Naive thymus-derived CD4-positive, alpha-beta T cell (primary cell): ENCODE measurements at regions of chr15 and their contacts with region 1.

Region 1: DNA sequence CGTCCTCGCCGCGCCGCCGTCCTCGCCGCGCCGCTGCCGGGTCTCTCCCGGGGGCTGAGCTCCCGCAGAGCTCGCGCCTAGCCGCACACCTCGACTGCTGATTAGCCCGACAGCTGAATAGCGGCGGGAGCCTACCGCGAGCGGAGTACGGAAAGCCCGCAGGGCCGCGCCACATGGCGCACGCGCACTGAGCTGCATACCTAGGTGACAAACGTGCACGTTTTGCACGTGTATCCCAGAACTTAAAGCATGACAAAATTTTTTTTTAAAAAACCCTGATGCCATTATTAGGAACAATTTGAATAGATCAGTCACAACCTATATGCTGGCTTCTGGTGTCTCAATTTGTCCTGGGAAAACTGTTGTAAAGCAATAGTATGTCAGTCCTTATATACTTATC is at the start of gene GOLGA8A:
- DNase-seq: peak in 8 of 9 donors; percentile 62 to 88 (median 82)
- ATAC-seq: peak; percentile 88
- H3K4me3 ChIP-seq: peak within 1 kb of the TSS; percentile 51
- H3K4me3 Mint-ChIP-seq: peak within 1 kb of the TSS in 9 of 10 donors; percentile 81 to 98 (median 95)
- H3K27ac ChIP-seq: peak within 1 kb of the TSS; percentile 60
- H3K27ac Mint-ChIP-seq: peak within 1 kb of the TSS in 8 of 9 donors; percentile 78 to 96 (median 94)
- H3K4me1 ChIP-seq: peaks cover 6 to 12% of the 10 kb centered on the region in 2 donors
- H3K4me1 Mint-ChIP-seq: peaks cover 3 to 32% (median 21%) of the 10 kb centered on the region in 7 donors
- H3K27me3 ChIP-seq: no peaks in the 10 kb centered on the region
- H3K27me3 Mint-ChIP-seq: peaks cover 0 to 16% (median under 1%) of the 10 kb centered on the region in 5 donors
- total RNA-seq, gene GOLGA8A: 147 to 361 (median 158) TPM

Region 2: GRCh38 chr15:34241372-34242330 is 196.0 kb before region 1 on chr15:
- CTCF ChIA-PET with region 1: no interaction called
- POLR2A ChIA-PET with region 1: no interaction called
- intact Hi-C with region 1: loop called in 1 of 2 experiments (anchors 5 kb)
- DNase-seq: peak in 7 of 9 donors; percentile 38 to 65 (median 52)
- ATAC-seq: peak; percentile 91
- H3K4me3 ChIP-seq: no peak overlapping the region
- H3K4me3 Mint-ChIP-seq: no peak overlapping the region
- H3K27ac ChIP-seq: no peak overlapping the region
- H3K27ac Mint-ChIP-seq: peak overlapping the region in 7 of 9 donors; percentile 7 to 75 (median 47)
- H3K4me1 ChIP-seq: no peaks in the 10 kb centered on the region
- H3K4me1 Mint-ChIP-seq: peaks cover 0 to 13% (median 4%) of the 10 kb centered on the region in 7 donors
- H3K27me3 ChIP-seq: no peaks in the 10 kb centered on the region
- H3K27me3 Mint-ChIP-seq: no peaks in the 10 kb centered on the region

Region 3: GRCh38 chr15:34987985-34988873 is 550.5 kb after region 1 on chr15 and contains the start of gene ZNF770:
- CTCF ChIA-PET with region 1: no interaction called
- POLR2A ChIA-PET with region 1: no interaction called
- intact Hi-C with region 1: loop called in 1 of 2 experiments (anchors 2 kb)
- DNase-seq: peak; percentile 67 to 91 (median 85)
- ATAC-seq: peak; percentile 95
- H3K4me3 ChIP-seq: peak within 1 kb of the TSS; percentile 99
- H3K4me3 Mint-ChIP-seq: peak within 1 kb of the TSS; percentile 93 to 100 (median 98)
- H3K27ac ChIP-seq: peak within 1 kb of the TSS; percentile 97
- H3K27ac Mint-ChIP-seq: peak within 1 kb of the TSS; percentile 96 to 100 (median 99)
- H3K4me1 ChIP-seq: peaks cover 22 to 25% of the 10 kb centered on the region in 2 donors
- H3K4me1 Mint-ChIP-seq: peaks cover 20 to 55% (median 45%) of the 10 kb centered on the region in 7 donors
- H3K27me3 ChIP-seq: no peaks in the 10 kb centered on the region
- H3K27me3 Mint-ChIP-seq: no peaks in the 10 kb centered on the region
- total RNA-seq, gene ZNF770: 32.5 to 69.9 (median 50.2) TPM